ENCODE measurements at regions of chr1 and their contacts with region 1.

Region 1: DNA sequence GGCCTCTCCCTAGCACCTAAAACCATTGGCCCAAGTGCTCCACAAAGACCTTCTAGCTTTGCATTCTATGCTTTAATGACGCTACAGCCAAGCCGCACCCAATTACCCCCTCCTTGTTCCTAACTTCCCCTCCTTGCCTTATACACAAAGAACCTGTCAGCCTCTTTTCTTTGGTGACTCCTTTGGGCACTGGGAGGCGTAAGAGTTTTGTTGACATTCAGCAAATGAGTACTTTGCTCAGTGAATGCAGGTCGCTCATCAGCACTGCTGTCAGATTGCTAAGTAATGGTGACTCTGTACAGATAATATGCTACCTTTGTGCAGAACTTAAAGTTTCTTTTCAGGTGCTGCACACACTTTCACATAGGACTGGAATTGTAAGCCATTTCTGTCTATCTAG is 187.6 kb upstream of the FAM78B start:
- DNase-seq: no peak
- H3K4me3 ChIP-seq: no peak overlapping the region
- H3K27ac ChIP-seq: no peak overlapping the region
- H3K4me1 ChIP-seq: no peaks in the 10 kb centered on the region
- H3K27me3 ChIP-seq: no peaks in the 10 kb centered on the region
- CTCF ChIP-seq: no peak

Region 2: DNA sequence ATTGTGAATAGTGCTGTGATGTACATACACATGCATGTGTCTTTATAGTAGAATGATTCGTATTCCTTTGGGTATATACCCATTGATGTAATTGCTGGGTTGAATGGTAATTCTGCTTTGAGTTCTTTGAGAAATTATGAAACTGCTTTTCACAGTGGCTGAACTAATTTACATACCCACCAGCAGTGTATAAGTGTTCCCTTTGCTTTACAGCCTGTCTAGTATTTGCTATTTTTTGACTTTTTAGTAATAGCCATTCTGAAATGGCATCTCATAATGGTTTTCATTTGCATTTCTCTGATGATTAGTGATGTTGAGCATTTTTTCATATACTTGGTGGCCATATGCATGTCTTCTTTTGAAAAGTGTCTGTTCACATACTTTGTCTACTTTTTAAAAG is 133.1 kb before region 1 on chr1:
- CTCF ChIA-PET with region 1: no interaction called
- dilution Hi-C with region 1: loop called (anchors 10 kb)
- in situ Hi-C with region 1: no loop called
- intact Hi-C with region 1: no loop called
- DNase-seq: no peak
- H3K4me3 ChIP-seq: no peak overlapping the region
- H3K27ac ChIP-seq: no peak overlapping the region
- H3K4me1 ChIP-seq: no peaks in the 10 kb centered on the region
- H3K27me3 ChIP-seq: no peaks in the 10 kb centered on the region
- CTCF ChIP-seq: no peak

Region 3: DNA sequence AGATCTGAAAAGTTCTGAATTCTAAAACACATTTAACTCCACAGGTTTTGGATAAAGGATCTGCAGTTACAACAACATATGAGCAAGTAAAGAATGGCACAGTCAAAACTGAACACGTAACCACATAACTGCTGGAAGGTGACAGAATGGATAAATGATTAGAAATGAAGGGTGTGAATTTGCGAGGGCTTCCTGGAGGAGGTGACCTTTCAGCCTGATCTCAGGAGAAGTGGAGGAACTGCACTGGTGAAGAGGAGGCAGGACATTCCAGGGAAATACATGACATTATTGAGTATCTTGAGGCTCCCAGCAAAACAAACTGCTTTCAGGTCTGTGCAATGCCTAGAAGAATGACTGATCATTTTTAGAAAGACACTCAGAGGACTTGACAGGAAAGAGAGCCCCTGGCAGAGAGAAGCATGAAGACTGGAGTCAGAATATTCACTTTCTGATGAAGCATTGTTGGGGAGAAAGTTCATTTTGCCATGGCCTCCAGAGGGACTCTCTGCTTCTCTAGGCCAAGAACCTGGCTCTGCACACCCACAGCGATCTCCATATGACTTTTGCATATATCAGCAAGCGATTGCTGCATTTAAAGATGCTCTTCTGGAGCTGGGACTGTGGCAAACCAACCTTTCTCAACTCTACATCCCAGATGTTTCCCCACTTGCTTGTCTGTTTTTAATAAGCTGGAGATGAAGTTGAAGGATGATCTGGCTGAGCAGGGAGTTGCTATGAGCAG is 64.9 kb before region 1 on chr1:
- CTCF ChIA-PET with region 1: no interaction called
- dilution Hi-C with region 1: loop called (anchors 5 kb)
- in situ Hi-C with region 1: no loop called
- intact Hi-C with region 1: no loop called
- DNase-seq: no peak
- H3K4me3 ChIP-seq: no peak overlapping the region
- H3K27ac ChIP-seq: no peak overlapping the region
- H3K4me1 ChIP-seq: no peaks in the 10 kb centered on the region
- H3K27me3 ChIP-seq: no peaks in the 10 kb centered on the region
- CTCF ChIP-seq: no peak

Region 4: DNA sequence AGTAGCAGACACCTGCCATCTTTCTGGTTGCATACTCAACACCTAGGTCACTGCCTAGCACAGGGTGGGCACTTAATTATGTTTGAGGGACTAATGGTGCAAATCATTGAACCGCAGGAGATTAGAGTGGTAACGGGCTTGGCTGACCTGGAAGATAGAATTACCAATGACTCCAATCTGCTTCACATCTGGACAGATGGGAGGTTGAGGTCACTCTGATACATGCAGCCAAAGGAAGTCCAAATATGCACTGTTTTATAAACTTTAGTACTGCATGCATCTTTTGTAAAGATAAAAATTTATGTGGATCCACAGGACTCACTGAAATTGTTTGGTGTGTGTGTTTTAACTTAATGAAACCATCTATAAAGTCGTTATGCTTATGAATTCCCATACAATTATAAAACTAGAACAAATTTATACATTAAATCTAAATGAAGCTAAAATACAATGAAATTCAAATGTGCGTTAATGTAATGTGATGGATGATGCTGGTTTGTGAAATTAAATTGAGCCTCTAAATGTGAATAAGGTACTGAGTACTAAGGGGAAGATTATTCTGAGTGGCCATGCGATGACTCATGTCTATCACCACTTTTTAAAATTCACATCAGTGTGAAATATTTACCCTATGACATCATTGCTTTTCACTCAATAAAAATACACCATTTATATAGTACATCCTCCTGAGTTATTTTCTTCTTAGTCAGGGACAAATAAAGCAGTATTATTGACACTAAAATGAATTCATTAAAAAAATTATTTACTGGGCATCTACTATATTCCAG is 37.1 kb after region 1 on chr1:
- CTCF ChIA-PET with region 1: no interaction called
- dilution Hi-C with region 1: loop called (anchors 5 kb)
- in situ Hi-C with region 1: no loop called
- intact Hi-C with region 1: no loop called
- DNase-seq: peak; percentile 4
- H3K4me3 ChIP-seq: no peak overlapping the region
- H3K27ac ChIP-seq: no peak overlapping the region
- H3K4me1 ChIP-seq: no peaks in the 10 kb centered on the region
- H3K27me3 ChIP-seq: no peaks in the 10 kb centered on the region
- CTCF ChIP-seq: no peak